CD8-positive, alpha-beta memory T cell (primary cell): ENCODE measurements at regions of chr19 and their contacts with region 1.

Region 1: DNA sequence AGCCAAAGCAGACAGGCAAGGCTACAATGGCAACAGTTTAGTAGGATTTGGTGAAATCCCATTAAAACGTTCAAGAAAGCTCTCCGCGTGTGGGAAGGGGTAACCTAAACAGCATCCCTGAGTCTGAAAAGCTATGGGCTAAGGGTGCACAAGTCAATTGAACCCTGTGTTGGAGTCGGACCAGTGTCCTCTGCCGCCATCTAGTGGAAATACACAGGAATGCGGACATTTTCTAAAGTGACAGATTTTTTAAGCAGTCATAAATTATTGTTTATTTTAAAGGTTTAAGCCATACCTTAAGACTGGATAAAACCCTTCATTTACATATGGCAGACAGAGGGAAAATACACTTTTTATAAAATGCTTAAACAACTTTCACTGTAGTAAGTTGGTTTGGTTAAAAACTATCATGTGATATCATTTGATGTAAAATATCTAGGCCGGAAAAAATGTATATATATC is 26.5 kb upstream of the LSM14A start:
- DNase-seq: peak; percentile 23 to 67 (median 47)
- H3K4me3 ChIP-seq: no peak overlapping the region
- H3K4me3 Mint-ChIP-seq: no peak overlapping the region
- H3K27ac ChIP-seq: no peak overlapping the region
- H3K27ac Mint-ChIP-seq: no peak overlapping the region
- H3K4me1 ChIP-seq: no peaks in the 10 kb centered on the region
- H3K4me1 Mint-ChIP-seq: no peaks in the 10 kb centered on the region
- H3K27me3 ChIP-seq: no peaks in the 10 kb centered on the region
- H3K27me3 Mint-ChIP-seq: peaks cover 0 to 5% of the 10 kb centered on the region in 2 donors

Region 2: DNA sequence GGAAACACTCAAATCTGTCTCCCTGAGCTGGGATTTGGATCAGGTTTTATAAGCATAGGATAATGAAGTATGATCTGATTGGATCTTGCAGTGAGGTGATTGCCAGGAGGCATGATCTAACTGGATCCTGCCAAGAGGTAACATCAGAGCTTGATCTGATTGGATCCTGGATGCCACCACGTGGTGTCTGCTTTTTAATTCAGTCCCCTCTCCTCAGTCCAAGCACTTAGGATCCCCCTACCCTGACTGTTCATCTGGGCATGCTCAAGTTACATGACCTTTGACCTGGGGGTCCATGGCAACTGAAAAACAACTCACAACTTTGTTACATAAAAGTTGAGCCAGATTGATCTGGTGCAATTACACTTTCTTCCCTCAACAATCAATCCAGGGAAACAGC is 20.9 kb before region 1 on chr19:
- CTCF ChIA-PET with region 1: interaction called, 14 read pairs
- POLR2A ChIA-PET with region 1: no interaction called
- DNase-seq: no peak
- H3K4me3 ChIP-seq: no peak overlapping the region
- H3K4me3 Mint-ChIP-seq: no peak overlapping the region
- H3K27ac ChIP-seq: no peak overlapping the region
- H3K27ac Mint-ChIP-seq: peak overlapping the region in 1 of 8 donors; percentile 1
- H3K4me1 ChIP-seq: no peaks in the 10 kb centered on the region
- H3K4me1 Mint-ChIP-seq: no peaks in the 10 kb centered on the region
- H3K27me3 ChIP-seq: no peaks in the 10 kb centered on the region
- H3K27me3 Mint-ChIP-seq: peaks cover 0 to 4% of the 10 kb centered on the region in 2 donors

Region 3: DNA sequence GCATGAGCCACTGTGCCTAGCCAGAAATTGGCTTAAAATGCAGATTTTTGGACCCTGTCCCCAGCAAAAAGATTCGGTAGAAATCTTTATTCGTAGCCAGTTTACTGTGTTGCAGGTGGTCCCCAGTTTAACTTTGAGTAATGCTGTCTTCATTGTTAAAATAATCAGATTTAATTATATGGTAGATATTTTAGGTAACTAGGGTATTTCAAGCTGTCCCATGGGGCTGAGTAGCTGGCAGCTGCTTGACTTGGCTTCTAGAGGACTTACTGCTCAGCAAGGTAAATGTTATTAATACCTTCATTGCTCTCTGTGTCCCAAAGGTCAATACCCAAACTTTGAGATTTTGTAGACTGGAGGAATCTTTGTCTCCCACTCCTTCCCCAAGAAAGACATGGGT is 47.7 kb after region 1 on chr19:
- CTCF ChIA-PET with region 1: no interaction called
- POLR2A ChIA-PET with region 1: no interaction called
- DNase-seq: no peak
- H3K4me3 ChIP-seq: no peak overlapping the region
- H3K4me3 Mint-ChIP-seq: no peak overlapping the region
- H3K27ac ChIP-seq: no peak overlapping the region
- H3K27ac Mint-ChIP-seq: peak overlapping the region in 5 of 8 donors; percentile 31 to 75 (median 57)
- H3K4me1 ChIP-seq: peaks cover 34% of the 10 kb centered on the region
- H3K4me1 Mint-ChIP-seq: peaks cover 42 to 57% (median 47%) of the 10 kb centered on the region in 3 donors
- H3K27me3 ChIP-seq: no peaks in the 10 kb centered on the region
- H3K27me3 Mint-ChIP-seq: peaks cover 0 to 2% of the 10 kb centered on the region in 2 donors